ENCODE measurements at regions of chr10 and their contacts with region 1.

Region 1: GRCh38 chr10:5987747-5988146 is 10.4 kb upstream of the IL15RA start:
- DNase-seq: peak; percentile 36
- ATAC-seq: peak; percentile 20
- H3K4me3 Mint-ChIP-seq: no peak overlapping the region
- H3K27ac Mint-ChIP-seq: peak overlapping the region; percentile 39
- H3K4me1 Mint-ChIP-seq: peaks cover 17% of the 10 kb centered on the region
- H3K27me3 Mint-ChIP-seq: peaks cover 7% of the 10 kb centered on the region

Region 2: GRCh38 chr10:5876181-5876768 is 111.5 kb before region 1 on chr10:
- CTCF ChIA-PET with region 1: no interaction called
- DNase-seq: no peak
- ATAC-seq: no peak
- H3K4me3 Mint-ChIP-seq: no peak overlapping the region
- H3K27ac Mint-ChIP-seq: no peak overlapping the region
- H3K4me1 Mint-ChIP-seq: peaks cover 4% of the 10 kb centered on the region
- H3K27me3 Mint-ChIP-seq: no peaks in the 10 kb centered on the region

Region 3: GRCh38 chr10:5977471-5978229 is 10.1 kb before region 1 on chr10 and contains the start of gene IL15RA:
- CTCF ChIA-PET with region 1: interaction called, 12 read pairs
- DNase-seq: peak; percentile 95
- ATAC-seq: peak; percentile 86
- H3K4me3 Mint-ChIP-seq: peak within 1 kb of the TSS; percentile 87
- H3K27ac Mint-ChIP-seq: peak within 1 kb of the TSS; percentile 98
- H3K4me1 Mint-ChIP-seq: peaks cover 35% of the 10 kb centered on the region
- H3K27me3 Mint-ChIP-seq: no peaks in the 10 kb centered on the region
- total RNA-seq, gene IL15RA: 31.1 to 31.7 TPM

Measured in activated CD8-positive, alpha-beta memory T cell treated with anti-CD3 and anti-CD28 coated beads, Interleukin-2, amount 10 ng/mL, durations not matched to agents 7 days and 5 days (primary cell).